ENCODE measurements at regions of chr12 and their contacts with region 1.

Region 1: DNA sequence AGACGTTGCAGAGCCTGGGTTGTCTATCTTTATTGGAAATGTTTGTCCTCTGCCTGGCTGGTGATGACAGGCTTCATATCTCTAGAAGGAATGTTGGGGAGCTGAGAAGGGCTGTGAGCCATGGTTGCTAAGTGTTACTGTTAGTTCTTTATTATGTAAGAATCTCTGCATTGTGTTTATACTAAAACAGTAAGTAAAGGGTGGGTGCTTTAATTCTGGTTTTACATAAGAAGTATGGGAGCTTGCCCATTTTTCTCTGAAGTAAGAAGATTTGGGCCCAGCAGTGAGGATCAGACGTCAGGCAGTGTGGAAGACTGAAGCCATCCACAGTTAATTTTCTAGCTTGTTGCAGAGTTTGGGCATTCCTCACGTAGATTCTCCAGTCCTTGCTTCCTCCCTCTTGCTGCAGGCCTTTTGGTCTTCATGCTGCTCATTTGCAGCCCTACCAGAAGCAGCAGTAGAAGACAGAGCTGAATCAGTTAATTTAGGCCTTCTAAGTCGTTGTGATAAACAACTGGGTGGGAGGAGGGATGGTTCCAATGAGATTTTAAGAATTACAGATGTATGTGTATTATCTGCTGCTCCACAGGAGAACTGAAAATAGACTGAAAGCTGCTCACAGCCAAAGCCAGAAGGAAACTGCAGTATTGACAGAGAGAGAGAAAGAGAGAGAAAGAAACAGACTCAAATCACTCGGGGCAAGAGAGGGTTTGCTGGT is 21.4 kb downstream of the WNT5B start:
- DNase-seq: no peak
- H3K4me3 ChIP-seq: no peak overlapping the region
- H3K4me3 Mint-ChIP-seq: no peak overlapping the region
- H3K27ac ChIP-seq: no peak overlapping the region
- H3K27ac Mint-ChIP-seq: no peak overlapping the region
- H3K4me1 ChIP-seq: no peaks in the 10 kb centered on the region
- H3K4me1 Mint-ChIP-seq: peaks cover 3 to 8% (median 4%) of the 10 kb centered on the region in 3 donors
- H3K27me3 ChIP-seq: no peaks in the 10 kb centered on the region
- H3K27me3 Mint-ChIP-seq: peaks cover 11 to 14% of the 10 kb centered on the region in 2 donors

Region 2: DNA sequence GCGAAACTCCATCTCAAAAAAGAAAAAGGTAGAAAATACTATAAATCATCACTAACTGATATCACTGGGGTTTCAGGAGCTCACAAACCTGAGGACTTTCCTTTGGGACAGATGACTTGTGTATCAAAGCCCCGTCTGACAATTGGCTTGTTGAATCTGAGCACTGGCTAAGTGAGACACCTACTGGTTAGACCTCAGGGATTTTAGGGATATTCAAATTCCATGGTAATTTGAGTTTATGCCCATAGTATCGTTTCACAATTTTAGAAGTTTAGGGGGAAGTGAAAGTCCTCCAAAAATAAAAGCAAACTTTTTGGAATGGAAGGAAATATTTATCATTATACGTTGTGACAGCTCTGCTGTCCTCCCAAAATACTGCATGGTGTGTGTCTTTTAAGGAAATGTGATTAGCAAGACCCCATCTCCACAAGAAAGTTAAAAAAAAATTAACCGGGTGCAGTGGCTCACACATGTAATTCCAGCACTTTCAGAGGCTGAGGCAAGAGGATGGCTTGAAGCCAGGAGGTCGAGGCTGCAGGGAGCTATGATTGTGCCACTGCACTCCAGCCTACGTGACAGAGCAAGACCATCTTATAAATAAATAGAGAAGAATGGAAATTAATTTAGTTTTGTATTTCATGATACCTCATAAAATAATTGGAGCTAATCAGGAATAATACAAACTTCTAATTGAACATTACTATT is 105.3 kb before region 1 on chr12:
- CTCF ChIA-PET with region 1: no interaction called
- POLR2A ChIA-PET with region 1: no interaction called
- DNase-seq: no peak
- H3K4me3 ChIP-seq: no peak overlapping the region
- H3K4me3 Mint-ChIP-seq: no peak overlapping the region
- H3K27ac ChIP-seq: no peak overlapping the region
- H3K27ac Mint-ChIP-seq: no peak overlapping the region
- H3K4me1 ChIP-seq: no peaks in the 10 kb centered on the region
- H3K4me1 Mint-ChIP-seq: no peaks in the 10 kb centered on the region
- H3K27me3 ChIP-seq: peaks cover 16% of the 10 kb centered on the region
- H3K27me3 Mint-ChIP-seq: peaks cover 16 to 53% of the 10 kb centered on the region in 2 donors

Region 3: GRCh38 chr12:1575408-1576401 is 74.7 kb before region 1 on chr12:
- CTCF ChIA-PET with region 1: no interaction called
- POLR2A ChIA-PET with region 1: no interaction called
- DNase-seq: no peak
- H3K4me3 ChIP-seq: no peak overlapping the region
- H3K4me3 Mint-ChIP-seq: no peak overlapping the region
- H3K27ac ChIP-seq: no peak overlapping the region
- H3K27ac Mint-ChIP-seq: peak overlapping the region in 1 of 8 donors; percentile 29
- H3K4me1 ChIP-seq: no peaks in the 10 kb centered on the region
- H3K4me1 Mint-ChIP-seq: no peaks in the 10 kb centered on the region
- H3K27me3 ChIP-seq: no peaks in the 10 kb centered on the region
- H3K27me3 Mint-ChIP-seq: peaks cover 0 to 3% of the 10 kb centered on the region in 2 donors

Region 4: DNA sequence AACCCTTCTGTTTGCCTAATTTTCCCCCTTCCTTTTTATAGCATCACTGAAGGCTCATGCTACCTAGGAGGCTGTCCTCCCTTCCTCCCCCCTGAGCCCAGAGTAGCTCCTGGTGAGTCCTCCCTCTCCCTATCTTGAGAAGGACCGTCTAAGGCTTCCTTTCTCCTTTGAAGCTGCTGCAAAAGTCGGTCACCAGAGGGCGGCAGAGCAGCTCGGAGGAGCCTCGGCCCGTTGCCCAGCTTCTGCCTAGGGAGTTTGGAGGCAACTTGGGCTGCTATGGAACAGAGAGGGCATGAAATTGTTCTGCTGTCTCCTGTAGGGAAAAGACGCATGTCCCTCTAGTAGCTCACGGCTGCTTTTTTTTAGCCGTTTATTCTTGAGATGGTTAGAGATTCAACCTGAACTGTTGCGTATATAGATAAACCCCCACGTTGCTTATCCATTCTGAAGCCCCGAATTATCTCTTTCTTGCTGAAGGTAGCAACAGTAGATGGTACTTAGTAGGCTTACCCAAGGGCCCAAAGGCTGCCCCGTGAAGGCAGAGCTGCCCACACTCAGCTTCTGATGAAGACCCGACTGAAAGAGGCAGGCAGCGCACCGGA is 15.7 kb before region 1 on chr12:
- CTCF ChIA-PET with region 1: interaction called, 17 read pairs
- POLR2A ChIA-PET with region 1: no interaction called
- DNase-seq: peak; percentile 22 to 66 (median 40)
- H3K4me3 ChIP-seq: no peak overlapping the region
- H3K4me3 Mint-ChIP-seq: no peak overlapping the region
- H3K27ac ChIP-seq: no peak overlapping the region
- H3K27ac Mint-ChIP-seq: no peak overlapping the region
- H3K4me1 ChIP-seq: no peaks in the 10 kb centered on the region
- H3K4me1 Mint-ChIP-seq: peaks cover 6 to 14% (median 13%) of the 10 kb centered on the region in 3 donors
- H3K27me3 ChIP-seq: peaks cover 13% of the 10 kb centered on the region
- H3K27me3 Mint-ChIP-seq: peaks cover 24 to 68% of the 10 kb centered on the region in 2 donors

Region 5: DNA sequence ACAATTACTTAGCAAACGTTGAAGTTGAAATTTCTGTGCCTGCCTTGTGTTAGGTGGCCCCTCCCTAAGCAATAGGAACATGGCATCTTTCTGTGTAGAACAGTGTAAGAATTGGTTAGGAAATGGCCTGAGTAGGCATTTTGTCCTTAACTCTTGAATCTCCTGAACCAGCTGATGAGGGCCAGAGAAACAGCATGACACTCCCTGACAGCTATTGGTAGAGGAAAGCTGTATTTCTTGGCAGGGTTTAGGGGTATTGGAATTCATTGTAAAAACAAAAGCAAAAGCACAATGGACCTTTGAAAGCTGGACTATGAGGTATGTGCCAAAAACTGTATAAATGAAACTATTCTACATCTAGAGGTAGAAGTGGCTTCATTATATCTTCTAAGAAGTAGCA is 129.4 kb after region 1 on chr12:
- CTCF ChIA-PET with region 1: interaction called, 14 read pairs
- POLR2A ChIA-PET with region 1: no interaction called
- DNase-seq: no peak
- H3K4me3 ChIP-seq: no peak overlapping the region
- H3K4me3 Mint-ChIP-seq: no peak overlapping the region
- H3K27ac ChIP-seq: no peak overlapping the region
- H3K27ac Mint-ChIP-seq: no peak overlapping the region
- H3K4me1 ChIP-seq: no peaks in the 10 kb centered on the region
- H3K4me1 Mint-ChIP-seq: peaks cover 20 to 24% (median 21%) of the 10 kb centered on the region in 3 donors
- H3K27me3 ChIP-seq: no peaks in the 10 kb centered on the region
- H3K27me3 Mint-ChIP-seq: no peaks in the 10 kb centered on the region